Naive thymus-derived CD4-positive, alpha-beta T cell (primary cell): ENCODE measurements at regions of chr2 and their contacts with region 1.

Region 1: GRCh38 chr2:220687231-220687843 is 884.8 kb downstream of the EPHA4 start:
- DNase-seq: peak; percentile 13 to 61 (median 50)
- ATAC-seq: peak; percentile 89
- H3K4me3 ChIP-seq: no peak overlapping the region
- H3K4me3 Mint-ChIP-seq: no peak overlapping the region
- H3K27ac ChIP-seq: no peak overlapping the region
- H3K27ac Mint-ChIP-seq: no peak overlapping the region
- H3K4me1 ChIP-seq: no peaks in the 10 kb centered on the region
- H3K4me1 Mint-ChIP-seq: no peaks in the 10 kb centered on the region
- H3K27me3 ChIP-seq: no peaks in the 10 kb centered on the region
- H3K27me3 Mint-ChIP-seq: peaks cover 2 to 35% (median 18%) of the 10 kb centered on the region in 5 donors

Region 2: GRCh38 chr2:219736209-219736608 is 951.1 kb before region 1 on chr2:
- CTCF ChIA-PET with region 1: no interaction called
- POLR2A ChIA-PET with region 1: no interaction called
- intact Hi-C with region 1: loop called in 1 of 2 experiments (anchors 5 kb)
- DNase-seq: peak in 2 of 9 donors; percentile 3 to 5
- ATAC-seq: no peak
- H3K4me3 ChIP-seq: no peak overlapping the region
- H3K4me3 Mint-ChIP-seq: no peak overlapping the region
- H3K27ac ChIP-seq: no peak overlapping the region
- H3K27ac Mint-ChIP-seq: no peak overlapping the region
- H3K4me1 ChIP-seq: no peaks in the 10 kb centered on the region
- H3K4me1 Mint-ChIP-seq: no peaks in the 10 kb centered on the region
- H3K27me3 ChIP-seq: peaks cover 0 to 3% of the 10 kb centered on the region in 2 donors
- H3K27me3 Mint-ChIP-seq: peaks cover 11 to 46% (median 27%) of the 10 kb centered on the region in 5 donors

Region 3: DNA sequence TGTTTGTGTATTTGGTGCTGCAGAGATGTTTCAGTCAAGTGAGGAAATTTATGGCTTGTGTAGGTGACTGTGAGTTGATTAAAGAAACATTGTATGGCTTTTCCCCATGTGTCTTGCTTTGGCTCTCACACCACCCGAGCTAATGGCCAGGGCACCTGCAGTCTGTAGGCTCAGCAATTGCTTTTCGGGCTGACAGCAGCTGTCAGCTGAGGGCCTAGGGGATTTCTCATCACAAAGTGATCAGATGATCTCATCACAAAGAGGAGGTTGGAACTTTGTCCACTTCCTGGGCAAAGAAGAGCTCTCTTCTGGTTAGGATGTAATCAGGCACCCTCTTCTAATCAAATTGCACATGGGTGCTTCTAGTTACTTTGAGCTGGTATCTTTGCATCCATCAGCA is 427.7 kb before region 1 on chr2:
- CTCF ChIA-PET with region 1: no interaction called
- POLR2A ChIA-PET with region 1: no interaction called
- intact Hi-C with region 1: no loop called
- DNase-seq: no peak
- ATAC-seq: no peak
- H3K4me3 ChIP-seq: no peak overlapping the region
- H3K4me3 Mint-ChIP-seq: no peak overlapping the region
- H3K27ac ChIP-seq: no peak overlapping the region
- H3K27ac Mint-ChIP-seq: no peak overlapping the region
- H3K4me1 ChIP-seq: no peaks in the 10 kb centered on the region
- H3K4me1 Mint-ChIP-seq: no peaks in the 10 kb centered on the region
- H3K27me3 ChIP-seq: no peaks in the 10 kb centered on the region
- H3K27me3 Mint-ChIP-seq: no peaks in the 10 kb centered on the region

Region 4: DNA sequence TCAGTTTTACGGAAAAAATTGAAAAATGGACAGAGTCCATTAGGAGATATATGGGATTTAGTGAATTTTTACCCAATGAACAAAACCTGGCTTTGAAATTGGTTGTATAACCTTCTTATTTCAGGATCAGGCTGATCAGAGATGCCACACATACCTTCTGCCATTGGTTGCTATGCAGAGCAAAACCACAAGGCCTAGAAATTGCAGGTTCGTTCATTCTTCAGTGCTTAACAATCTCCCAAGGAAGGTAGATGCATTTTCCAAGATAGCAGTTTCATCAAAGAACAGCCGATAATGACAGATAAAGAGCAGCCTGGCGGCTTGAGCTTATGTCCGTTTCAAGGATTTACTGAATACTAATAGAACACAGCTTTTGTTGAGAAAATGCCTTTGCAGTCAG is 15.9 kb after region 1 on chr2:
- CTCF ChIA-PET with region 1: no interaction called
- POLR2A ChIA-PET with region 1: no interaction called
- intact Hi-C with region 1: no loop called
- DNase-seq: no peak
- ATAC-seq: no peak
- H3K4me3 ChIP-seq: no peak overlapping the region
- H3K4me3 Mint-ChIP-seq: no peak overlapping the region
- H3K27ac ChIP-seq: no peak overlapping the region
- H3K27ac Mint-ChIP-seq: no peak overlapping the region
- H3K4me1 ChIP-seq: no peaks in the 10 kb centered on the region
- H3K4me1 Mint-ChIP-seq: no peaks in the 10 kb centered on the region
- H3K27me3 ChIP-seq: no peaks in the 10 kb centered on the region
- H3K27me3 Mint-ChIP-seq: peaks cover 0 to 4% (median 0%) of the 10 kb centered on the region in 5 donors

Region 5: DNA sequence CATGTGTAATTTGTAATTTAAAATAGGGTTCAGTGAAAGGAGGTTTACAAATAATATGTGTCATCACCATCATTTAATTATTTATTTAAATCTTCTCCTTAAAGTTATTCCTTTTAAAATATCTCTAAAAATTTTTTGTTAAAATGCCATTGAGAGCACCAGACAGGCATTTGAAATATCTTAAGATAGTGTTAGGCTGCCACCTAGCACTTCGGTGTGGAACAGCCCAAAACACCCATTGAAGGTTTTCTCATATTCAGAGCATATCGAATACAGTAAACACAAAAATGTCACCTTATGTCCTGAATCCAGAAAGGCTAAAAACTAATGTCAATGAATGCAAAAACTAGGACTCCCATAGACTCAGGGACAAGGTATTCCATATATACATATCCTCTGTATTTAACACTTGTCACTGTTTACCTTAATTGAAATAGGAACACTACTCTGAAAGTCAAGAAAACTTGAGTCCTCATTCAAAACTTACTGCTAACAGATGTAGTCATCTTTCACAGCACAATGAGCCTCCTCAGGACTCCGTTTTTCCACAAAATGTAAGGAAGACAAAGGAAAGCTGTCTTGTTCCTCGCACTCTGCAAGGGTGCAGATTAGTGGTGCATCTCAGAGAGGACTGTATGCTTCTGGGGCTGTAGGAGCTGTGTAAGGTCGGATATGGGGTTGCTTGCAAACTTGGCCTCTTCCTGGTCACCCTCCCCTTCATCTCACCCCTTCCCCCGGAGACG is 1281.9 kb after region 1 on chr2:
- CTCF ChIA-PET with region 1: no interaction called
- POLR2A ChIA-PET with region 1: no interaction called
- intact Hi-C with region 1: loop called in 1 of 2 experiments (anchors 2 kb)
- DNase-seq: peak in 3 of 9 donors; percentile 1 to 5 (median 4)
- ATAC-seq: no peak
- H3K4me3 ChIP-seq: no peak overlapping the region
- H3K4me3 Mint-ChIP-seq: no peak overlapping the region
- H3K27ac ChIP-seq: no peak overlapping the region
- H3K27ac Mint-ChIP-seq: no peak overlapping the region
- H3K4me1 ChIP-seq: no peaks in the 10 kb centered on the region
- H3K4me1 Mint-ChIP-seq: no peaks in the 10 kb centered on the region
- H3K27me3 ChIP-seq: no peaks in the 10 kb centered on the region
- H3K27me3 Mint-ChIP-seq: peaks cover 0 to 13% (median 7%) of the 10 kb centered on the region in 5 donors